Activated naive CD4-positive, alpha-beta T cell treated with anti-CD3 and anti-CD28 coated beads, Interleukin-2, amount 10 ng/mL, durations not matched to agents 7 days and 5 days (primary cell): ENCODE measurements at regions of chr13 and their contacts with region 1.

Region 1: DNA sequence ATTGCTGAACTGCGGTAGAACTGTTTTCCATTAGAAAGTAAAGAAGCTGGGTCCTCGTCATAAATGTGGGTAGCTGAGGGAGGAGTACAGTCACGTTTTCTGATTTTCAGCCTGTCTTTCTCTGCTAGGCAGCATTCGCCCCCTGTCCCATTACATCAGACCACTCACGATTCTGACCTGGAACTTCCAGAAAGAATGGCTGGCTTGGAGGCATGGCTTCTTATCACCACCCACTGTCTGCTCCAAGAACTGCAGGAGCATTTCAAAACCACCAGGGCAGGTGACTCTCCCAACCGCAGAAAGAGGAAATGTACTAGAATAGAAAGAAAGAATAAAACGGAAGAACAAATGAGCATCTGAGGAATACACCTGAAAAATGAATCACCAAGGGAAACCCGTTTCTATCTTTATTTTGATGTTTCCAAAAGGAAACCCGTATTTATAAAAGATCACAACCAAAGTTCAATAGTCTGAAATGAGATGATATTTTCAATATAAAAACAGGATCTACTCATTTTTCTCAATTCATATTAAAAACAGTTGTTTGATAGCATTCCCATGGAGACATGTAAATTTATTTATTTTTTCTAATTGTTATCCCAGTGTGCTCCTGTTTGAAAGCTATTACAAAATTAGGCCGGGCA is 22.1 kb upstream of the POMP start:
- DNase-seq: peak; percentile 59
- H3K4me3 Mint-ChIP-seq: no peak overlapping the region
- H3K27ac Mint-ChIP-seq: no peak overlapping the region
- H3K4me1 Mint-ChIP-seq: peaks cover 13% of the 10 kb centered on the region
- H3K27me3 Mint-ChIP-seq: peaks cover 25% of the 10 kb centered on the region

Region 2: GRCh38 chr13:28324181-28324789 is 312.5 kb before region 1 on chr13:
- CTCF ChIA-PET with region 1: interaction called, 24 read pairs
- DNase-seq: peak; percentile 74
- H3K4me3 Mint-ChIP-seq: no peak overlapping the region
- H3K27ac Mint-ChIP-seq: peak overlapping the region; percentile 37
- H3K4me1 Mint-ChIP-seq: peaks cover 3% of the 10 kb centered on the region
- H3K27me3 Mint-ChIP-seq: peaks cover 22% of the 10 kb centered on the region

Region 3: GRCh38 chr13:28658796-28659620 is 22.2 kb after region 1 on chr13 and contains the start of gene POMP:
- CTCF ChIA-PET with region 1: interaction called, 12 read pairs
- DNase-seq: peak; percentile 95
- H3K4me3 Mint-ChIP-seq: peak within 1 kb of the TSS; percentile 97
- H3K27ac Mint-ChIP-seq: peak within 1 kb of the TSS; percentile 97
- H3K4me1 Mint-ChIP-seq: peaks cover 54% of the 10 kb centered on the region
- H3K27me3 Mint-ChIP-seq: no peaks in the 10 kb centered on the region

Region 4: DNA sequence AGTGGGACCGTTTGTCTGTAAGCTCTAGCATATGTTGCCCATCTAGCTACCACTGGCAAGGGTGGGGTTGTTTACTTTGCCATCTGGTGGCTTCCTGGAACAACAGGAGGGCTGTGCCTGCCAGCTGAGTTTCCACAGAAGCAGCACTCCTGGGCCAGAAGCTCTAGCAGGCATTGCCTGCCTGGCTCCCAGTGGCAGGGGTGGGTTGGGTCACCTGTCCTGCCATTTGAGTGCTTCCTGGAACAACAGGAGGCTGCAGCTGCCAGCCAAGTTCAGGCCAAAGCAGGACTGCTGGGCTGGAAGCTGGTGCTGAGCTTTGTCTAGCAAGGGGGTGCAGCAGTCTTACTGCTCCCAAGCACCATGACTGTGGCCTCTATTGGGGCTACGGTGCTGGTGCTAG is 423.0 kb after region 1 on chr13:
- CTCF ChIA-PET with region 1: no interaction called
- DNase-seq: no peak
- H3K4me3 Mint-ChIP-seq: no peak overlapping the region
- H3K27ac Mint-ChIP-seq: no peak overlapping the region
- H3K4me1 Mint-ChIP-seq: no peaks in the 10 kb centered on the region
- H3K27me3 Mint-ChIP-seq: no peaks in the 10 kb centered on the region